HEK293 (cell line): ENCODE measurements at regions of chr14 and their contacts with region 1.

Region 1: DNA sequence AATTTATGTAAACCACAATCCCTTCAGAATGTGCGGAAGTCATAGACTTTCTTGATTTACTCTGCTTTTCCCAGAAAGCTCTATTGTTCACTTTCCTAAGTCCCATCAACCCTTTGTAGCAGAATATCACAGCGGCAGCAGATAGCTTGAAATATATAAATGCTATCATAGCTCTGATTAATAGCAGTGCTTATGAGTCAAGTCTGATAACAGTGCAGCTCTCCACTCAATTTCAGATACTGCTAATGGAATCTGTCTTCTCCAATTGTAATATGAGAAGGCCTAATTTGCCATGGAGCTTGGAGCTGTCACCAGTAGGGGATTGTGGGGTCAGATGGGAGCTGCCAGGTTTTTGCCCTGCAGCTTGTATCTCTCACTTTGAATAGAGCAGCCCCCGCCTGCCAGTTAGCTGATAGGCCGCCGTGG is 10.9 kb downstream of the TMEM260 start:
- H3K4me3 ChIP-seq: no peak overlapping the region
- H3K27ac ChIP-seq: peak overlapping the region; percentile 11
- H3K4me1 ChIP-seq: peaks cover 38% of the 10 kb centered on the region
- CTCF ChIP-seq: no peak

Region 2: GRCh38 chr14:56579345-56580220 is 11.0 kb before region 1 on chr14 and contains the start of gene TMEM260:
- CTCF ChIA-PET with region 1: interaction called, 10 read pairs
- POLR2A ChIA-PET with region 1: interaction called, 22 read pairs
- H3K4me3 ChIP-seq: peak within 1 kb of the TSS; percentile 92
- H3K27ac ChIP-seq: peak within 1 kb of the TSS; percentile 82
- H3K4me1 ChIP-seq: peaks cover 23% of the 10 kb centered on the region
- CTCF ChIP-seq: peak; percentile 64; the same call in 1 of the 2 replicates

Region 3: GRCh38 chr14:56603648-56604047 is 13.1 kb after region 1 on chr14:
- CTCF ChIA-PET with region 1: no interaction called
- POLR2A ChIA-PET with region 1: no interaction called
- H3K4me3 ChIP-seq: no peak overlapping the region
- H3K27ac ChIP-seq: no peak overlapping the region
- H3K4me1 ChIP-seq: 0 out of 2 replicates have a peak, but pooled peaks cover 2% of the 10 kb centered on the region
- CTCF ChIP-seq: no peak

Region 4: DNA sequence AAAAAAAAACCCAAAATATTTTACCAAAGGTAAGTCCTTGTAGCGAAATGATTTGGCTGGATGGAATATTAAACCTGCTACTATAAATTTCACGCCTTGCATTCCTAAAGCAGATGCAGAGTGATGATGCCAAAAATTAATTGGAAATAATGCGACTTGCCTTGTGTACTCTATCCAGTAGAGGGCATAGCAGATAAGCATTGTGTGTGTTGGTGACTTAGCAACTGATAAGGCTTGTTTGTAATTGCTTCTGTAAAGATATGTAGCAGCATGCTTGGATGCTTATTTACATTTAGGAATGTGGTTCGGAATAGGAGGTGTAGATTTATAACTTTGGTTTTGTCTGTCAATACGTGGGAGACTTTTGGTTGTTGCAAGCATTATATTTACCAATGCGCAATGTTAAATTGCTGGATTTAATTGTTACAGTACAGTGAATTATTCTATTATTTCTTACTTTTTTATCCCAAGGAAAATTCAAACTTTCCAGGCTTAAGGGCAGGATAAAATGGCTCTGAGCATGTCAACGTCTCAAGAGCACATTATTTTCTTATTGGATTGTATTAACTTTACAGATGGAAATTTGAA is 69.5 kb after region 1 on chr14:
- CTCF ChIA-PET with region 1: no interaction called
- POLR2A ChIA-PET with region 1: no interaction called
- H3K4me3 ChIP-seq: no peak overlapping the region
- H3K27ac ChIP-seq: no peak overlapping the region
- H3K4me1 ChIP-seq: peaks cover 11% of the 10 kb centered on the region
- CTCF ChIP-seq: peak; percentile 64